AG04450 (cell line): ENCODE measurements at regions of chr10 and their contacts with region 1.

Region 1: GRCh38 chr10:5423771-5424170 is 11.4 kb downstream of the NET1 start:
- DNase-seq: no peak
- H3K4me3 ChIP-seq: no peak overlapping the region
- H3K27ac ChIP-seq: no peak overlapping the region
- H3K27me3 ChIP-seq: no peaks in the 10 kb centered on the region
- CTCF ChIP-seq: no peak

Region 2: DNA sequence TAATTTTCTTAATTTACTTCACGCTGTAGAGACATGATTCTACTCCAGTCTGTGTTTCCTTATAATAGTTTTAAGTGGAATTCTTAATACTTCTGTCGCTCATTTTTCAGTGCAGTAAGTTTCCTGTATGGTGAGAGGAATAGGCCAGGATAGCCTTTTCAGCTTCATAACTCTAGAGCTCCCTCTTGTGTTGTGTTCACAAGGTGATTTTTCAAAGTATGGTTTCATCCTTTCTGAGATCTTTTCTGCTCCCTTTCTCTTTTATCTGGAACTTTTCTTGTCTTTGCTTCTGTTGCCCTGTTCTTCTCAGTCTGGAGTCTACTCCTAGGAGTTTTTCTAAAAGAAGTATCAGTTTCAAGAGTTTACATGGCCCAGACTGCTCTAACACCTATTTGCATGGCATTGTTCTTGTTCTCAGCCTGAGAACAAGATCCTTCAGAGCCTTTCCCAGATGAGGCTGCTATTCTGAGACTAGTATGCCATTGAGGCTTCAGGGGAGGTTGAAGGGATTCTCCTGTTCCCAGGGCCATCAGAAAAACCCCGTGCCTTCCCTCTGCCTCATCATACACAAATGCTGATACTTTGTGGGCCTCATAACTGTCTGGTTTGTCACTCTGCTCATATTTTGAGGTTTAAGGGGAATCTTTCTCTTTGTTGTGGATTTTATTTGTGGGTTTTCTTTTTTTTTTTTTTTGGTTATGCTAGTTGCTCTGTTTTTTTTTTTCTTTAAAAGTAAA is 10.4 kb after region 1 on chr10:
- CTCF ChIA-PET with region 1: interaction called, 62 read pairs
- POLR2A ChIA-PET with region 1: no interaction called
- DNase-seq: no peak
- H3K4me3 ChIP-seq: no peak overlapping the region
- H3K27ac ChIP-seq: peak overlapping the region; percentile 48
- H3K27me3 ChIP-seq: no peaks in the 10 kb centered on the region
- CTCF ChIP-seq: peak; percentile 77